ENCODE measurements at regions of chr3 and their contacts with region 1.

Region 1: GRCh38 chr3:134464064-134464697 is 21.6 kb downstream of the ANAPC13 start:
- DNase-seq: peak; percentile 77 to 90
- H3K4me3 ChIP-seq: no peak overlapping the region
- H3K27ac ChIP-seq: peak overlapping the region; percentile 65 to 72
- H3K4me1 ChIP-seq: peaks cover 0 to 77% (median 49%) of the 10 kb centered on the region in 4 donors
- H3K27me3 ChIP-seq: no peaks in the 10 kb centered on the region
- CTCF ChIP-seq: no peak

Region 2: GRCh38 chr3:134373994-134374790 is 90.0 kb before region 1 on chr3 and contains the start of gene AMOTL2:
- intact Hi-C with region 1: loop called (anchors 5 kb)
- DNase-seq: peak; percentile 83 to 93
- H3K4me3 ChIP-seq: peak within 1 kb of the TSS; percentile 90 to 97
- H3K27ac ChIP-seq: peak within 1 kb of the TSS; percentile 98 to 99
- H3K4me1 ChIP-seq: peaks cover 18 to 48% (median 43%) of the 10 kb centered on the region in 4 donors
- H3K27me3 ChIP-seq: no peaks in the 10 kb centered on the region
- CTCF ChIP-seq: no peak

Measured in tibial artery (tissue), 4 donors.